Dendritic cell treated with granulocyte-macrophage colony-stimulating factor and Interleukin-4, amounts not matched to agents 40 ng/mL and 50 ng/mL, for 4 days (primary cell): ENCODE measurements at regions of chr1 and their contacts with region 1.

Region 1: GRCh38 chr1:42747125-42747524 is 7.1 kb upstream of the CLDN19 start:
- H3K4me3 Mint-ChIP-seq: no peak overlapping the region
- H3K27ac Mint-ChIP-seq: no peak overlapping the region
- H3K4me1 Mint-ChIP-seq: peaks cover 28% of the 10 kb centered on the region
- H3K27me3 Mint-ChIP-seq: no peaks in the 10 kb centered on the region

Region 2: GRCh38 chr1:42576935-42577334 is 170.2 kb before region 1 on chr1:
- intact Hi-C with region 1: loop called (anchors 1 kb)
- H3K4me3 Mint-ChIP-seq: no peak overlapping the region
- H3K27ac Mint-ChIP-seq: no peak overlapping the region
- H3K4me1 Mint-ChIP-seq: no peaks in the 10 kb centered on the region
- H3K27me3 Mint-ChIP-seq: no peaks in the 10 kb centered on the region